ENCODE measurements at regions of chr10 and their contacts with region 1.

Region 1: DNA sequence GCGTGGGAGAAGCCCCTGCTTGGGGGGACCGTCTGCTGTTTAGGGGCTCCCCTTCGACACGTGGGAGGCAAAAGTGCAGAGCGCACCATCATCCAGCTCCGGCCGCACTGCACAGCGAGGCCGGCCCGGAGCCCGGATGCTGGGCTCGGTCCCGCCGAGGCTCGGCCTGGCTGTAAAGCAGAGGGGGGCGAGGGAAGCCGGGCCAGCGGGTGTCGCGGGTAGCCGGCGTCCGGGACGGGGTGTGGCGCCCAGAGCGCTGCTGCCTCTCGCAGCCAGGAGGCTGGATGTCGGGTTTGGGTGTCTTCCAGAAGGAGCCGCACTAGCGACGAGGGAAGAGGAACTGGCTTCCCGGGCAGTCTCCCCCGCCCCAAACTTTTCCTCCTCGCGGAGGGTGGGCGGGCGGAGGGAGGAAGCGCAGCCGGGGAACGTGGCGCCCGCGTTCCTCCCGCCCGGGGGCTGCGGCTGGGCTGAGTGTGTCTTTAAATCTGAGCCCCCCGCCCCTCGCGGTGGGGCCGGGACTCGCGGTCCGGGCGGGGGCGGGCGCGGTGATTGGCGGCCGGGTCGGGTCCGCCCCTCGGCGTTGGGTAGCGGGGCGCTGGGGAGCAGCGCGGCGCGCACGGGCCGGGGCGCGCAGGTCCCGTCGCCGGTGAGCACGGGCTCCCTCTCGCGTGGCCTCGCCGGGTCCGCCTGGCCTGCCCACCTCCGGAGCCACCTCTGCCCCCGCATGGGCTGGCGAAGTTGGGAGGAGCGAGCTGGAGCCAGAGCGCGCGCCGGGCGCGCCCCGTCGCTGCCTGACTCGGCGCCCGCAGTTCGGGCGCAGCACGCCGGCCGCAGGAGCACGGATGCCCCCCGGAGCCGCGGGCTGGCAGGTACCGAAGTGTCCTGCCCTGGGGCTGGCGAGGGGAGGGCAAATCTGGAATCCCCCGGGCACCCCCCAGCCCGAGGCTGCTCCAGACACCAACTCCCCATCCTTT is at the start of gene PALD1:
- DNase-seq: peak in 1 of 2 experiments; percentile 89
- H3K4me3 ChIP-seq: peak within 1 kb of the TSS; percentile 64 to 84 (median 70)
- H3K27ac ChIP-seq: peak within 1 kb of the TSS; percentile 22; the same call in 1 of the 2 replicates
- H3K4me1 ChIP-seq: peaks cover 9 to 22% (median 18%) of the 10 kb centered on the region in 4 experiments
- H3K27me3 ChIP-seq: peaks cover 0 to 6% (median 2%) of the 10 kb centered on the region in 4 experiments; a peak in 3 of 7 replicates
- CTCF ChIP-seq: peak; percentile 1 to 16 (median 13); a peak in 3 of 4 replicates
- EP300 ChIP-seq: no peak
- POLR2A ChIP-seq: no peak; a peak in 2 of 3 replicates
- RAD21 ChIP-seq: 0 out of 4 replicates have a peak, but pooled peaks have one; percentile 2 to 20
- total RNA-seq, gene PALD1: 31.8 and 32.8 TPM in 2 replicates

Region 2: GRCh38 chr10:70466951-70467350 is 11.5 kb before region 1 on chr10:
- CTCF ChIA-PET with region 1: interaction called, 33 read pairs
- POLR2A ChIA-PET with region 1: interaction called, 5 read pairs
- DNase-seq: no peak
- H3K4me3 ChIP-seq: no peak overlapping the region
- H3K27ac ChIP-seq: no peak overlapping the region
- H3K4me1 ChIP-seq: no peaks in the 10 kb centered on the region; a peak in 1 of 7 replicates
- H3K27me3 ChIP-seq: no peaks in the 10 kb centered on the region; a peak in 1 of 7 replicates
- CTCF ChIP-seq: no peak
- EP300 ChIP-seq: no peak
- POLR2A ChIP-seq: no peak
- RAD21 ChIP-seq: no peak

Region 3: GRCh38 chr10:70493660-70494234 is 15.3 kb after region 1 on chr10:
- CTCF ChIA-PET with region 1: interaction called, 29 read pairs
- POLR2A ChIA-PET with region 1: interaction called, 7 read pairs
- DNase-seq: peak in 1 of 2 experiments; percentile 81
- H3K4me3 ChIP-seq: peak overlapping the region in 1 of 4 experiments; percentile 7; a peak in 3 of 8 replicates
- H3K27ac ChIP-seq: peak overlapping the region; percentile 13; the same call in 1 of the 2 replicates
- H3K4me1 ChIP-seq: peaks cover 13 to 31% (median 19%) of the 10 kb centered on the region in 4 experiments
- H3K27me3 ChIP-seq: no peaks in the 10 kb centered on the region
- CTCF ChIP-seq: no peak
- EP300 ChIP-seq: no peak
- POLR2A ChIP-seq: no peak; a peak in 1 of 3 replicates
- RAD21 ChIP-seq: no peak

Region 4: DNA sequence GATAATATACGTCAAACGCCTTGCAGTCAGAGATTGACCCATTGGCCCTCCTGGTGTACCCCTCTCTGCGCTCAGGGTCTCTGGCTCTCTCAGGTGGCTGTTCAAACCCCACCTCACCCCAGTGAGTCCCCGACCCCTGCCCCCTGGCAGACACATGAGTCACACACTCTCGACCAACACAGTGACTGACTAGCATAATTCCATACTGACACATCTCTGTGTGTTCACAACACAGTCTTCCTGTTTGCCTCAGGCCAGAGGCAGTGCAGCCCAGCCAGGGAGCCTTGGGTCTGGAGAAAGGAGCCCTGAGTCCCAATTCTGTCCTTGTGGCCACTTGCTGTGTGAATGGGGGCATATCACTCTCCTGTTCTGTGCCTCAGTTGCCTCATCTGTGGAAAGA is 40.2 kb after region 1 on chr10:
- CTCF ChIA-PET with region 1: interaction called, 10 read pairs
- POLR2A ChIA-PET with region 1: no interaction called
- DNase-seq: no peak
- H3K4me3 ChIP-seq: no peak overlapping the region
- H3K27ac ChIP-seq: no peak overlapping the region
- H3K4me1 ChIP-seq: peaks cover 0 to 4% (median 3%) of the 10 kb centered on the region in 4 experiments; a peak in 6 of 7 replicates
- H3K27me3 ChIP-seq: no peaks in the 10 kb centered on the region; a peak in 1 of 7 replicates
- CTCF ChIP-seq: no peak
- EP300 ChIP-seq: no peak
- POLR2A ChIP-seq: no peak
- RAD21 ChIP-seq: no peak